PC-9 (cell line): ENCODE measurements at regions of chr12 and their contacts with region 1.

Region 1: GRCh38 chr12:63068857-63069442 is 82.1 kb downstream of the AVPR1A start:
- DNase-seq: peak; percentile 7 to 58
- H3K4me3 ChIP-seq: no peak overlapping the region
- H3K27ac ChIP-seq: no peak overlapping the region
- H3K4me1 ChIP-seq: no peaks in the 10 kb centered on the region
- H3K27me3 ChIP-seq: no peaks in the 10 kb centered on the region
- CTCF ChIP-seq: peak; percentile 78

Region 2: GRCh38 chr12:62426089-62426488 is 642.9 kb before region 1 on chr12:
- CTCF ChIA-PET with region 1: interaction called, 12 read pairs
- POLR2A ChIA-PET with region 1: no interaction called
- intact Hi-C with region 1: no loop called
- DNase-seq: no peak
- H3K4me3 ChIP-seq: no peak overlapping the region
- H3K27ac ChIP-seq: no peak overlapping the region
- H3K4me1 ChIP-seq: no peaks in the 10 kb centered on the region
- H3K27me3 ChIP-seq: no peaks in the 10 kb centered on the region
- CTCF ChIP-seq: no peak

Region 3: DNA sequence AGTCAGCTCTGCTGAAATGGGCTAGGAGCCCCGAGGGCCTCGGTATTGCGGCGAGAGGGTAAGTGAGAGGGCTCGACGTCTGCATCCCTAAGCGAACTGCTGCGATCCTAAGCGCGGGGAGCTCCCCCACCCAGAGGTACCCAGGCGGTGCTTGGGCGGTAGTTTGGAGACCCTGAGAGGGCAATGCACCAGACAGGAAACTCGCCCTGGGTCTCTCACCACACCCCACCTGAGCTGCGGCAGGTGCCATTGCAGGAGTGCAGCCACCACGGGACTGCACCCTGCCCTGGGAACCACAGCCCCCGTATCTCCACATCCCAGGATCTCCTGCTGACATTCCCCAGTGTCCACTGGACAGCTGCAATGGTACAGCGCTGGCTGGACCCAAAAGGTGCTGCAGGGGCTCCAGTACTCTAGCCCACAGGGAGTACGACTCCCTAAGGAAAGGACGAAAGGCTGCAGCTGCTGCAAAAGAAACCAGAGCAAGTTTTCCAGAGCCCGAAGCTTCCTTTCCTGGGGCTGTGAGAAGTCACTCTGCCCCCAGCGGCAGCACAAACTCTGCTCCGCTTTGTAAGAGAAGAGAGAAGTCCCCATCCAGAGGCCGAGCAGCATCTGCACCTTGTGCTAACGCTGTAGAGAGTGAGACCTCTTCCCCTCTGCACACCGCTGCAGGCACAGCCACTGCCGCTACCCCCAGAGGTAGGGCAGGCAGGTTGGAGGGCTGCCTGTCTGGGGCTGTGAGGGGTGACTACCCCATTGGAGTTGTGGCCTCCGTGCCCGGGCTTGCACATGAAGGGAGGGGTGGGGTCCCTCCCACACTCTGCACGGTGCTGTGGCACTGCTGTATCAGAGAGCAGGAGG is 633.4 kb before region 1 on chr12:
- CTCF ChIA-PET with region 1: interaction called, 4 read pairs
- POLR2A ChIA-PET with region 1: no interaction called
- intact Hi-C with region 1: loop called (anchors 1 kb)
- DNase-seq: peak in 1 of 2 experiments; percentile 21
- H3K4me3 ChIP-seq: peak overlapping the region; percentile 38; the same call in 1 of the 2 replicates
- H3K27ac ChIP-seq: no peak overlapping the region
- H3K4me1 ChIP-seq: no peaks in the 10 kb centered on the region
- H3K27me3 ChIP-seq: no peaks in the 10 kb centered on the region
- CTCF ChIP-seq: no peak

Region 4: DNA sequence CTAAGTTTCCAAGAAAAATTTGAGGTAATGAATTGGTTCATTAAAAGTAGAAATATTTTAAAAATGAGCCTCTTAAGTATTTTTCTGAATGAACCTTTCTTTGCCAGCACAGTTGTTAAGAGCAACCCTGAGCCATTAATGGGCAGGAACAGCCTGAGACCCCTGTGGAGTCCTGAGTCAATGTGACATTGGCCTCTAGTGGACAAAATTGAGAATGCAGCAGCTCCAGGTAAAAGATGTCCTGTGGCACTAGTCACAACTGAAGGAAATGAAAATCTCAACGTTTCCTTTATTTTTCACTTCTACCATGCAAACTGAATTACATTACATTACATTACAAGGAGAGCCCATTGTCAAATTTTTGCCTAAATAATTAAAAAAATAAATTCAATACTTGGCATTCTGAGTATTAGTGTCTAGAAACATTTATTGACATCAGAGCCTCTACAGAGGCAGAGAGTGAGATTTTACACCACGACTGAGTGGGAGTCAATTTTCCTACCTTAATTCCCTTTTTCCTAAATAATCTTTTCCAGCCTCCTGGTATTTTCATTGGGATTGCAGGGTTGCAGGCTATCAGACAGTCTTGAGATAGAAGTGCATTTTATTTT is 269.7 kb before region 1 on chr12:
- CTCF ChIA-PET with region 1: interaction called, 5 read pairs
- POLR2A ChIA-PET with region 1: no interaction called
- intact Hi-C with region 1: loop called (anchors 1 kb)
- DNase-seq: peak; percentile 52 to 54
- H3K4me3 ChIP-seq: no peak overlapping the region
- H3K27ac ChIP-seq: no peak overlapping the region
- H3K4me1 ChIP-seq: peaks cover 13% of the 10 kb centered on the region
- H3K27me3 ChIP-seq: no peaks in the 10 kb centered on the region
- CTCF ChIP-seq: peak; percentile 97

Region 5: GRCh38 chr12:62813031-62813829 is 255.7 kb before region 1 on chr12:
- CTCF ChIA-PET with region 1: no interaction called
- POLR2A ChIA-PET with region 1: no interaction called
- intact Hi-C with region 1: loop called (anchors 2 kb)
- DNase-seq: peak in 1 of 2 experiments; percentile 27
- H3K4me3 ChIP-seq: no peak overlapping the region
- H3K27ac ChIP-seq: no peak overlapping the region
- H3K4me1 ChIP-seq: no peaks in the 10 kb centered on the region
- H3K27me3 ChIP-seq: no peaks in the 10 kb centered on the region
- CTCF ChIP-seq: peak; percentile 64

Region 6: GRCh38 chr12:62934799-62935674 is 133.9 kb before region 1 on chr12 and contains the start of gene PPM1H:
- CTCF ChIA-PET with region 1: interaction called, 6 read pairs
- POLR2A ChIA-PET with region 1: no interaction called
- intact Hi-C with region 1: loop called (anchors 5 kb)
- DNase-seq: peak; percentile 80 to 89
- H3K4me3 ChIP-seq: peak within 1 kb of the TSS; percentile 91
- H3K27ac ChIP-seq: peak within 1 kb of the TSS; percentile 38
- H3K4me1 ChIP-seq: peaks cover 38% of the 10 kb centered on the region
- H3K27me3 ChIP-seq: no peaks in the 10 kb centered on the region
- CTCF ChIP-seq: peak; percentile 77
- total RNA-seq, gene PPM1H: 11.4 and 13.5 TPM in 2 replicates

Region 7: GRCh38 chr12:63302269-63302940 is 233.5 kb after region 1 on chr12:
- CTCF ChIA-PET with region 1: no interaction called
- POLR2A ChIA-PET with region 1: no interaction called
- intact Hi-C with region 1: no loop called
- DNase-seq: no peak
- H3K4me3 ChIP-seq: no peak overlapping the region
- H3K27ac ChIP-seq: no peak overlapping the region
- H3K4me1 ChIP-seq: no peaks in the 10 kb centered on the region
- H3K27me3 ChIP-seq: no peaks in the 10 kb centered on the region
- CTCF ChIP-seq: no peak